PC-9 (cell line): ENCODE measurements at regions of chr16 and their contacts with region 1.

Region 1: DNA sequence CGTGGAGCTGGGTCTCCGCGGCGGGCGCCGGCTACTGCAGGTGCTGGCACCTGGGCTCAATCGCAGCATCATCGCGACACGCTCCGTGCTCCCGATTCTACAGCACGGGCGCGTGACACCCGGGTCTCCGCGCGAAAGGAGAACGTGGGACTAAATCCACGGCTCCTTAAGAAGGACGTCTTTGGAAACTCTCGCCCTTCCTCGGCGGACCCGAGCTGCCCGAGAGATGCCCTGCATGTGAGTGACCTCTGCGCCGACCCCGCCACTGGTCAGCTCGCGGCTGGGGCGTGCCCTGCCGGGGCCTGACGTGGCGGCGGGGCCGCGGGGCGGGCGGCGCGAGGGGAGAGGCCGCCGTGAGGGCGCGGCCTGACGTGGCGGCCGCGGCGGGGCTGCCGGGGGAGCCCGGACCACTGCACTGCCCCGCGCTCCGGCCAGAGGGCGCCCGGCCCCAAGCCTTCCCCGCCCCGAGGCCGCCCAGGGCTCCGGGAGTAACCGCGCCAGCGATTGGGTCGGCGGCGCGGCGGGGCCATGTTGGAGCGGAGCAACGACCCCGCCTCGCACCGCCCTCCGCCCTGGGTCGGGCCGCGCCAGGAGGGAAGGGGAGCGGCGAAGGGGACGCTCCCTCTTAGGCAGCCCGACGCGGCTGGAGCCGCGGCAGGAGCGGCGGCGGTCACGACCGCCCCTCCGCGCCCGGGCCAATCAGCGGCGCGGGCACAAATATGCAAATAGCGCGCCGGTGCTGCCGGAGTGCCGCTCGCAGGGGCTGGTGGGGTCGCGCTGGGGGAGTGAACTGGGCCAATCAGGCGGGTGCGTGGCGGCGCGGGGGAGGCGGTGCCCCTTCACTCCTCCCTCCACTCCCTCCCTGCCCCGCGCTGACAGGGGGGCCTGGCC is 75.6 kb downstream of the CHD9 start:
- DNase-seq: peak; percentile 83 to 95
- H3K4me3 ChIP-seq: peak overlapping the region; percentile 63
- H3K27ac ChIP-seq: peak overlapping the region; percentile 81
- H3K4me1 ChIP-seq: peaks cover 5% of the 10 kb centered on the region
- H3K27me3 ChIP-seq: no peaks in the 10 kb centered on the region
- CTCF ChIP-seq: peak; percentile 51; the same call in 1 of the 2 replicates

Region 2: GRCh38 chr16:52976539-52977167 is 153.8 kb before region 1 on chr16:
- CTCF ChIA-PET with region 1: no interaction called
- POLR2A ChIA-PET with region 1: no interaction called
- intact Hi-C with region 1: no loop called
- DNase-seq: peak in 1 of 2 experiments; percentile 1
- H3K4me3 ChIP-seq: no peak overlapping the region
- H3K27ac ChIP-seq: no peak overlapping the region
- H3K4me1 ChIP-seq: no peaks in the 10 kb centered on the region
- H3K27me3 ChIP-seq: peaks cover 40% of the 10 kb centered on the region; the same call in 1 of the 2 replicates
- CTCF ChIP-seq: no peak; the same call in 1 of the 2 replicates

Region 3: DNA sequence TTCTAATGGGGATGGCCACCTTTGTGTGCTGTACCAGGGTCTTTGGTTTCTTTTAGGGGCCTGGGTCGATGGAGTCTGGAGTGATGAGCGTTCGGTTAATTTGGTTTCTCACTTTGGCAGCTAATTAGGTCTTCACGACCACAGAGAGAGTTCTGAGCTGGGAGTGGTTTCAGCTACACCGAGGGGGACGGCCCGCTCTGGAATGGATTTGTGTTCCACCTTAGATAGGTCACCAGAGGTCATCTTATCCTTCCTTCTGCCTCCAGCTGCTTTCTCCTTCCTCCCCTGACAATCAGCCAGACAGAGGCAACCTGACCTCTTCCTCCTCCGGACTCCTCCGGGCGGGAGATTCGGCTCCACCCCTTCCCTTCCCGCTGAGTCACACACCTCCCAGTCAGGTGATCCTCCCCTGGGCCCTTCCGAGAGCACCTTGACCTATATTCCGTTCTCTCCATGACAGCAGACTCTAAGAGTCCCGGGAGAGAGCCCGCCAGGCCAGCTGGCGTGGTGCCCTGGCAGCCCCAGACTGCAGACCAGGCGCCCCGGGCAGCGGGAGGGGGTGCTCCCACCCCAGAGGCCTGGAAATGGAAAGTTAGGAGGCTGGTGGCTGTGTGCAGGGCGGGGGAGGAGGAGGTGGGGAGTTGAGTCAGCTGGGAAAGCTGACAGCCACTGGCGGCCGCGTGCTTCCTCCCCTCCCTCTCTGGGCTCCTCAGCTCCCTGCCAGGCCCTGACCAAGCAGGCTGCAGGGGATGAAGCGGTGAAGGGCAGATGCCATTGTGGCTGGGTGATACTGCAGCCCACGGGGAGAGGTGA is 30.9 kb before region 1 on chr16:
- CTCF ChIA-PET with region 1: no interaction called
- POLR2A ChIA-PET with region 1: interaction called, 3 read pairs
- intact Hi-C with region 1: loop called (anchors 1 kb)
- DNase-seq: peak; percentile 94 to 97
- H3K4me3 ChIP-seq: peak overlapping the region; percentile 51
- H3K27ac ChIP-seq: peak overlapping the region; percentile 94
- H3K4me1 ChIP-seq: peaks cover 60% of the 10 kb centered on the region
- H3K27me3 ChIP-seq: no peaks in the 10 kb centered on the region
- CTCF ChIP-seq: no peak

Region 4: DNA sequence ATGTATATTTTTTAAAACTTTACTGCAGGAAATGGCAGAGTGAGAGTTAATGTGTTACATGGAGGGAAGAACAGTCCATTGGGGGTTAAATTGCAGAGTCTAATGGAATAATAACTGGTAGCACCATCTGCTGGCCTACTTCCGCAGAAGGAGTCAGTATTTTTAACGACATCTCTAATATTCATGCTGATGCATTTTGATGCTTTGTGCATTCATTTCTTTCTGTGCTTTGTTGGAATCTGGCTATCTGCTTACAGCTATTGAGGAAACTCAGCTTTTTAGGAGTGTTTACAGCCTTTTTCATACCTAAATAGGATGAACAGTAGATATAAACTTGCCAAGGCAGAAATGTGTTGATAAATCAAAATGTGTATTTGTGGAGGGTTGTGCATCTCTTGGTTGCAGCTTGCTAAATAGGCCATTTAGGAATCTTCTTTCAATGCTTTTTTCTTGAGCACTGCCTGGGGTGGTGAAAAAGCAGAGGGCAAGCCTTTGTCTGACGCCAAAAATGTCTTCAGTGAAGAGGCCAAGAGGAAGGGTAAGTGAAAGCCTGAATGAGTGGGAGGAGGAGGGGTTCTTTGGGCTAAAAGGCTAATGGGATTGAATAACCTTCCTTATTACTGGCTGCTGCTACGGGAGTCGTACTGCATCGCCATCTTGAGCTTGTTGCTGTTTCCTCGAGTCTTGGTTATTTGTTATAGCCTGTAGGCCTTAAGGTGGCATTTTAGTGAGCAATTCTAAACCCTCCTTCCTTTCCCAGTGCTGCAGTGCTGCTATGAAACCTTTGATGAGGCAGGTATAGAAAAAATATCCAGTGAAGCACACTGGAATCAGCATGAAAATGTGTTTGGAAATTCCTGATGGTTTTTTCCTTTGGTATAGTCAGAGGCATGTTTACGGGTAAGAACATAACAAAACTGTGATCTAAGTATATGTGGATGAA is 77.7 kb after region 1 on chr16:
- CTCF ChIA-PET with region 1: no interaction called
- POLR2A ChIA-PET with region 1: no interaction called
- intact Hi-C with region 1: loop called (anchors 1 kb)
- DNase-seq: peak in 1 of 2 experiments; percentile 27
- H3K4me3 ChIP-seq: no peak overlapping the region
- H3K27ac ChIP-seq: no peak overlapping the region
- H3K4me1 ChIP-seq: no peaks in the 10 kb centered on the region
- H3K27me3 ChIP-seq: no peaks in the 10 kb centered on the region
- CTCF ChIP-seq: peak; percentile 28; the same call in 1 of the 2 replicates

Region 5: DNA sequence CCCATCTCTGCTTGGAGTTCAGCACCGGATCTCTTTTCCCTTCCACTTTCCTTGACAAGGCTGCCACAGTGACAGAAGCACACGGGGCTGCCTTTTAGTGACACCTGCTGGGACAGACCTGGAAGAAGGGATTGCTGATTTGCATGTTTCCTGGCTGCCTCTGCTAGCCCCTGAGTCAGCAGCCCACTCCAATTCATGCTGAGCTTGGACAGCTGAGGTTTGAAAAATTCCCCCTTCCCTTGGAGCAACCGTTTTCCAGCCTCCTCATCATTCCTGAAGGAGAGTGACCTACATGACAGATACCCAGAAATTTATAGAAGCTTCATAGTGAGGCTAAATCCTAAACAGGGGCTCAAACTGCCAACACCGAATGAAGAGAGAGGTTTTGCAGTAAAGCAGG is 285.1 kb after region 1 on chr16:
- CTCF ChIA-PET with region 1: no interaction called
- POLR2A ChIA-PET with region 1: no interaction called
- intact Hi-C with region 1: loop called (anchors 5 kb)
- DNase-seq: peak in 1 of 2 experiments; percentile 35
- H3K4me3 ChIP-seq: no peak overlapping the region
- H3K27ac ChIP-seq: no peak overlapping the region
- H3K4me1 ChIP-seq: peaks cover 25% of the 10 kb centered on the region
- H3K27me3 ChIP-seq: no peaks in the 10 kb centered on the region
- CTCF ChIP-seq: no peak; the same call in 1 of the 2 replicates